Heart left ventricle (tissue), 16 donors: ENCODE measurements at regions of chr2 and their contacts with region 1.

Region 1: GRCh38 chr2:219642465-219643080 is 15.1 kb downstream of the SLC4A3 start:
- DNase-seq: peak; percentile 93 to 98 (median 97)
- ATAC-seq: peak; percentile 28 to 63 (median 54)
- H3K4me3 ChIP-seq: no peak overlapping the region
- H3K27ac ChIP-seq: peak overlapping the region; percentile 32 to 99 (median 86)
- H3K4me1 ChIP-seq: peaks cover 0 to 76% (median 38%) of the 10 kb centered on the region in 12 donors
- H3K27me3 ChIP-seq: no peaks in the 10 kb centered on the region
- CTCF ChIP-seq: peak; percentile 90 to 99 (median 98)
- POLR2A ChIP-seq: peak in 1 of 2 donors; percentile 42

Region 2: GRCh38 chr2:219419331-219420197 is 223.0 kb before region 1 on chr2:
- intact Hi-C with region 1: loop called in 1 of 10 experiments (anchors 10 kb)
- DNase-seq: peak in 4 of 5 donors; percentile 78 to 82 (median 80)
- ATAC-seq: peak; percentile 40 to 72 (median 63)
- H3K4me3 ChIP-seq: peak overlapping the region; percentile 49 to 80 (median 63)
- H3K27ac ChIP-seq: peak overlapping the region; percentile 88 to 99 (median 96)
- H3K4me1 ChIP-seq: peaks cover 0 to 39% (median 10%) of the 10 kb centered on the region in 12 donors
- H3K27me3 ChIP-seq: peaks cover 0 to 21% (median 15%) of the 10 kb centered on the region in 9 donors
- CTCF ChIP-seq: no peak
- POLR2A ChIP-seq: peak; percentile 29 to 51

Region 3: DNA sequence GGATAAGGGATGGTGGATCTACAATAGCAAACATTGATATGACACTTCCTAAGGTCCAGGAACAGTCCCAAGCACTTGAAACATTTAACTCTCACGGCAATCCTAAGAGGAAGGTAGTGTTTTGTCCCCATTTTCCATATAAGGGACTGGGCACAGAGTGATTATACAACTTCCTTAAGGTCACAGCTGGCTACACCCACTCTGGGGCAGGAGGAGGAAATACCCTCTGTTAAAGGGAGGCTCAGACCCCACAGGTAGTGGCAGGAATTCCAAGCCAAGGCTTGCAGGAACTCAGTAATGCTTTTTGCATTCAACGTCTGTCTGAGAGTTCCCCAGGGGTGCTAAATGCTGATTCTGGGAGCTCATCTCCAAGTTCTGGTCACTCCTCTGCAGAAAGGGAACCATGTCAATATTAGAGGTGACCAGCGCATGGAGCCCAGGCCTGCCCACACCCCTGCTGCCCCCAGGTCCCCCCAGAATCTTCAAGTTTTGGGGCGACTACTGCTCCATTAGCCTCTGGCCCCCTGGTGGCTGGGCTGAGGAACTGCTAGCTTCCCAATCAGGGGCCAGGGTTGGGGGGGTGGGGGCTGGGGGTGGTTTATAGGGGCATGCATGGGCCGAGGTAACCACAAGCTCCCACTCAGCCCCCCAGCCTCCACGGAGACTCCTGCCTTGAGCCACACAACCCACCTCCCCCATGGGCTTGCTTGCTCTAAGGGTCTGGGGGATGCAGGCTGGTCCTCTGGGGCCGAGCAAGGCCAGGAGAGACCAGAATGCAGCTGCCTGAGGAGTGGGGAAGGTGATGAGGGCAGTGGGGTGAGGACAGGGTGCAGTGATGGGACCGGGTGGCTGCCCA is 82.3 kb before region 1 on chr2:
- intact Hi-C with region 1: loop called in 2 of 10 experiments (anchors 5 to 10 kb)
- DNase-seq: peak in 1 of 5 donors; percentile 17
- ATAC-seq: peak in 2 of 4 donors; percentile 5 to 23
- H3K4me3 ChIP-seq: no peak overlapping the region
- H3K27ac ChIP-seq: peak overlapping the region in 1 of 12 donors; percentile 14
- H3K4me1 ChIP-seq: peaks cover 0 to 27% (median 7%) of the 10 kb centered on the region in 12 donors
- H3K27me3 ChIP-seq: no peaks in the 10 kb centered on the region
- CTCF ChIP-seq: peak; percentile 54 to 80 (median 70)
- POLR2A ChIP-seq: no peak

Region 4: GRCh38 chr2:219597552-219598307 is 44.8 kb before region 1 on chr2 and contains the start of gene STK11IP:
- intact Hi-C with region 1: loop called in 1 of 10 experiments (anchors 2 kb)
- DNase-seq: peak; percentile 96 to 98 (median 97)
- ATAC-seq: peak; percentile 97 to 99 (median 98)
- H3K4me3 ChIP-seq: peak within 1 kb of the TSS; percentile 33 to 80 (median 68)
- H3K27ac ChIP-seq: peak within 1 kb of the TSS; percentile 85 to 97 (median 94)
- H3K4me1 ChIP-seq: peaks cover 0 to 20% (median 13%) of the 10 kb centered on the region in 12 donors
- H3K27me3 ChIP-seq: no peaks in the 10 kb centered on the region
- CTCF ChIP-seq: no peak
- POLR2A ChIP-seq: peak in 1 of 2 donors; percentile 72
- total RNA-seq, gene STK11IP: 7.3 to 24.1 (median 13.9) TPM

Region 5: GRCh38 chr2:219689676-219690628 is 47.4 kb after region 1 on chr2:
- intact Hi-C with region 1: loop called in 7 of 10 experiments (anchors 1 to 5 kb)
- DNase-seq: peak in 2 of 5 donors; percentile 29 to 31
- ATAC-seq: peak in 3 of 4 donors; percentile 56 to 68 (median 68)
- H3K4me3 ChIP-seq: no peak overlapping the region
- H3K27ac ChIP-seq: peak overlapping the region in 9 of 12 donors; percentile 40 to 80 (median 67)
- H3K4me1 ChIP-seq: peaks cover 0 to 14% (median 5%) of the 10 kb centered on the region in 12 donors
- H3K27me3 ChIP-seq: peaks cover 0 to 12% (median 0%) of the 10 kb centered on the region in 9 donors
- CTCF ChIP-seq: peak; percentile 68 to 85 (median 78)
- POLR2A ChIP-seq: no peak

Region 6: GRCh38 chr2:219736209-219736608 is 93.6 kb after region 1 on chr2:
- intact Hi-C with region 1: no loop called
- DNase-seq: no peak
- ATAC-seq: peak; percentile 40 to 75 (median 56)
- H3K4me3 ChIP-seq: no peak overlapping the region
- H3K27ac ChIP-seq: no peak overlapping the region
- H3K4me1 ChIP-seq: peaks cover 0 to 12% (median 2%) of the 10 kb centered on the region in 12 donors
- H3K27me3 ChIP-seq: peaks cover 0 to 4% (median 0%) of the 10 kb centered on the region in 9 donors
- CTCF ChIP-seq: peak; percentile 21 to 71 (median 54)
- POLR2A ChIP-seq: no peak

Region 7: GRCh38 chr2:219783359-219783975 is 140.9 kb after region 1 on chr2:
- intact Hi-C with region 1: no loop called
- DNase-seq: no peak
- ATAC-seq: no peak
- H3K4me3 ChIP-seq: no peak overlapping the region
- H3K27ac ChIP-seq: no peak overlapping the region
- H3K4me1 ChIP-seq: no peaks in the 10 kb centered on the region
- H3K27me3 ChIP-seq: no peaks in the 10 kb centered on the region
- CTCF ChIP-seq: no peak
- POLR2A ChIP-seq: no peak